ENCODE measurements at regions of chr10 and their contacts with region 1.

Region 1: DNA sequence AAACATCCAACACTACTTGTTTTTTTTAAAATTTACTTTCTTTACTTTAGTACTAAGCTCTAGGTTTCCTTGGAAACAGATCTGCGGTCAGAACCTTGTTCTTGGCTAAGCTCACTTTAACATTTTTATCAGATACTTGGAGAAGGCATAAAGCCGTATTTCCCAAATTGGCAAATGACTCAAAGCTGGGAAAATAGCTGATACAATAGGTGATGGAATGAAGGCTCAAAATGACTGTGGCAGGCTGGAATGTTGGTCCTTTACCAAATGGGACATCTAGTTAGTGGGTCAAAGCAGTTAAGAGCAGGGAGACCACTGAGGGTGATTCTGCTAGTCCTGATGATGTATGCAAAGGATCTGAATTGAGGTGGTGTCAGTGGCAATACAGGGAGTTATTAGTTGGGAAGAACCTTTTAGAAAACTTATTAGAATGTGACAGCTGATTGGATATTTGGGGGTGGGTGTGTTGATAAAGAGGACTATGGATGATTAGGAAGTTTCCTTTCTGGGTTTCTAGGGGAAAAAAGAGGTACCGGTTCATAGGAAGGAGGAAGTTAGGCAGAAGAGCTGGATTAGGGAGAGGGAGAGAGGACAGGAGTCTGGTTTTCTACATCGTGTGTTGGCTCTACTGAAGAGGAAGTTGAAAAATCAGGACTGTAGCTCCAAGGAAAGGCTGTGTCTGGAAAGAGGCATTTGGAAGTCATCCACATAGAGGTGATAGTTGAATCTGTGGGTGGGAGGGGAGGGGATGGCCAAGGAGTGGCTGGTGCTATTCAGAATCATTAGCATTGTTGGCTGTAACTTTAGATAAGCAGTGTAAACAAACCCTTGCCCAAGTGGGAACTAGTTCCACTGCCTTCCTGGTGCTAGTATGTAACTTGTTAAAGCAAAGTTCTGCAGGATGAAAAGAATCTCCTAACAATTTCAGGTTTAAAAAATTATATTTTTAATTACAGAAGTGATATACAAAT is 13.1 kb downstream of the PLCE1 start:
- DNase-seq: peak; percentile 78 to 89
- H3K4me3 ChIP-seq: peak overlapping the region; percentile 10
- H3K4me3 Mint-ChIP-seq: peak overlapping the region; percentile 62
- H3K27ac Mint-ChIP-seq: peak overlapping the region; percentile 74
- H3K4me1 ChIP-seq: peaks cover 67% of the 10 kb centered on the region
- H3K4me1 Mint-ChIP-seq: peaks cover 33% of the 10 kb centered on the region
- H3K27me3 ChIP-seq: no peaks in the 10 kb centered on the region
- H3K27me3 Mint-ChIP-seq: no peaks in the 10 kb centered on the region
- CTCF ChIP-seq: no peak

Region 2: DNA sequence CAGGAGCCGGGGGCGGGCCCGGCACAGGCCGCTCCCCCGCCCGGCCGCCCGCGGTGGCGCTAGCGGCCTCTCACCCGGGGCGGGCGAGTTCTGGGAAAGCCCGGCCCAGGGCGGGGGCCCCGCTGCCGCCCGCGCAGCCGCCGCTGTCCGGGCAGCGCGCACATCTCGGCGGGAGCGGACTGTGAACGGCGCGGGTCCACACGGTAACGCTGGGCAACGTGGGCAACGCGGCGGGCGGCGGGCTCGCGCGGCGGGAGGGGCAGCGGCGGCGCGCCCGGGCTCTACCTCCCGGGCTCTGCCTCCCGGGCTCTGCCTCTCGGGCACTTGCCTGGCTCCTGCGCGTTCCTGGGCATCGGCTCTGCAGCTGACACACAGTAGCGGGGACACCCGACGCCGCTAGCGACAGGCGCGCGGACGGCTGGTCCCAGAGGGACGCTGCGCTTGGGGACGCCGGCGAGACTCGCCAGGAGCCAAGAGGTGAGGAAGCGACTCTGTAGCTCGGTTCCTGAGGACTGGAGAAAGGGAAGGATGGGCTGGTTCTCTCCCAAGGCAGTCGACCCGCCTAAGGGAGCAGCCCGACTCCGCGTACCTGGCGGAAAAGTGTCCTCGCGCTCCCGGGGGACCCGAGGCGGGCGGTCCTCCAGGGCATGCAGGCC is 13.0 kb before region 1 on chr10 and contains the start of gene PLCE1:
- CTCF ChIA-PET with region 1: interaction called, 11 read pairs
- POLR2A ChIA-PET with region 1: interaction called, 8 read pairs
- intact Hi-C with region 1: loop called (anchors 1 kb)
- DNase-seq: peak; percentile 65 to 83
- H3K4me3 ChIP-seq: peak within 1 kb of the TSS; percentile 72
- H3K4me3 Mint-ChIP-seq: peak within 1 kb of the TSS; percentile 70
- H3K27ac Mint-ChIP-seq: peak within 1 kb of the TSS; percentile 6
- H3K4me1 ChIP-seq: peaks cover 49% of the 10 kb centered on the region
- H3K4me1 Mint-ChIP-seq: peaks cover 54% of the 10 kb centered on the region
- H3K27me3 ChIP-seq: no peaks in the 10 kb centered on the region
- H3K27me3 Mint-ChIP-seq: no peaks in the 10 kb centered on the region
- CTCF ChIP-seq: no peak
- total RNA-seq, gene PLCE1: 10.7 and 12.8 TPM in 2 replicates

Region 3: DNA sequence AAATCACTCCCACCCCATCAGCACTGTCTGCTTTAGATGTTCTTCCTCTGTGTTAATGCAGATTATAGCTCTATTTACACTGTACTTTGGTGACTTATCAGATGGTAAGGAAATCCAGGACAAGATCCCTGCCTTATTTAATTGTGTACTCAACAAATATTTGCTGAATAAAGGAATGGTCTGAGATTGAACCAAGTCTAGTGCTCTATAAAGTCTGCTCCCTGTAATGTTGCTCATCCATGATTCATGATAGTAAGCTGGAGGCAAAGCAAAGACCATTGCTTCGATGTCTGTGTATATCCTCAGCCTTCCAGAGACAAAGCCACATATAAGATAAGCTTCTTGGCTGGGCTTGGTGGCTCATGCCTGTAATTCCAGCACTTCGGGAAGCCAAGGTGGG is 20.3 kb after region 1 on chr10:
- CTCF ChIA-PET with region 1: no interaction called
- POLR2A ChIA-PET with region 1: no interaction called
- intact Hi-C with region 1: loop called (anchors 1 kb)
- DNase-seq: peak; percentile 30 to 45
- H3K4me3 ChIP-seq: no peak overlapping the region
- H3K4me3 Mint-ChIP-seq: no peak overlapping the region
- H3K27ac Mint-ChIP-seq: no peak overlapping the region
- H3K4me1 ChIP-seq: peaks cover 6% of the 10 kb centered on the region
- H3K4me1 Mint-ChIP-seq: peaks cover 12% of the 10 kb centered on the region
- H3K27me3 ChIP-seq: no peaks in the 10 kb centered on the region
- H3K27me3 Mint-ChIP-seq: no peaks in the 10 kb centered on the region
- CTCF ChIP-seq: no peak

Region 4: DNA sequence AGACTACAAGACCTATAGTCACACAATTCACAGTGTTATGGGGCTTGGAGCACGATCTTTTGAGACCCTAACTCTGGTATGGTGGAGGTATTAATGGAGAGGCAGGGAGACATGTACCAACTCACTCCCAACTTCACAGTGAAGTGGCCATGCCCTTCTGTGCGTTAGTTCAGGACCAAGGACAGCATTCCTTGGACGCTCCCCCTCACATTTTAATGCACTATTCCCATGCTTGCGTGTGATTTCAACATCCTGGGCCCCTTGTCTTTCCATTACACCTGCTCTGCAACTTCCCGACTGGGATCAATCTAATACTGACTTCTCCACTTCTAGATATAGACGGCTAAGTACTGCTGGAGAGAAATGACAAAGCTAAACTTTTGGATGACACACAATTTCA is 59.5 kb after region 1 on chr10:
- CTCF ChIA-PET with region 1: no interaction called
- POLR2A ChIA-PET with region 1: no interaction called
- intact Hi-C with region 1: loop called (anchors 2 kb)
- DNase-seq: peak; percentile 64 to 73
- H3K4me3 ChIP-seq: no peak overlapping the region
- H3K4me3 Mint-ChIP-seq: no peak overlapping the region
- H3K27ac Mint-ChIP-seq: no peak overlapping the region
- H3K4me1 ChIP-seq: peaks cover 17% of the 10 kb centered on the region
- H3K4me1 Mint-ChIP-seq: peaks cover 19% of the 10 kb centered on the region
- H3K27me3 ChIP-seq: no peaks in the 10 kb centered on the region
- H3K27me3 Mint-ChIP-seq: no peaks in the 10 kb centered on the region
- CTCF ChIP-seq: no peak

Region 5: DNA sequence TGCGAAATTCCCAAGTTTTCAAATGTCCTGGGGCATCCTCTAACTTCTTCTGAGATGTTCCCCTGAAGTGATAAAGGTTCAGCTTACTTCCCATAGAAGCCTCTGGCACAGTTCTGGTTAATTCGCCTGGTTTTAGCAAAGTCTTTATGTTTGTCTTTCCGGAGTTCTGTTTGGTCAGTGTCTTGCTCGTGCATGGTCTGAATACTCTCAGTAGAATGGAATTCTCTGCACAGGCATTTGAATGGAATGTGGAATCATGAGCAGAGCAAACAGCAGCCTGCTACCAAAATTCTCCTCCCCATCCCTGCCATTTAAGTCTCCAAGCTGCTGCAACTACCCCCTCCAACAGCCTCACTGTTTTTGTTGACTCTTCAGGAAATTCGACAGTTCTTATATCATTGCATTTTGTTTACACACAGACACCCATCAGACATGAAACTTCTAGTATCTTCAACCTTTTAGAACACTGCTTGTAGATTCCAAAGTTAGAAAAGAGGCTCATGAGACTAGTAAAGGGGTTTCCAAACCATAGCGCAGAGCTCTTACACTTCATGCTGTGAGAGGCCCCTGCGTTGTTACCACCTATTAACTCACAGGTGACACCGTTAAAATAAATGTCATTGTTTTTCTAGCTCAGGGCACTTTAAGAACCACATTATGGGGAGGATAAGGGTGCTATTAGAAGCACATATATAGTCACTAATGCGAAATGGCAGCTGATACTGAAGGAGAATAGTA is 116.6 kb after region 1 on chr10:
- CTCF ChIA-PET with region 1: no interaction called
- POLR2A ChIA-PET with region 1: no interaction called
- intact Hi-C with region 1: loop called (anchors 1 kb)
- DNase-seq: peak; percentile 79 to 84
- H3K4me3 ChIP-seq: no peak overlapping the region
- H3K4me3 Mint-ChIP-seq: peak overlapping the region; percentile 47
- H3K27ac Mint-ChIP-seq: no peak overlapping the region
- H3K4me1 ChIP-seq: peaks cover 45% of the 10 kb centered on the region
- H3K4me1 Mint-ChIP-seq: peaks cover 22% of the 10 kb centered on the region
- H3K27me3 ChIP-seq: no peaks in the 10 kb centered on the region
- H3K27me3 Mint-ChIP-seq: no peaks in the 10 kb centered on the region
- CTCF ChIP-seq: no peak

Region 6: GRCh38 chr10:94315024-94315451 is 308.2 kb after region 1 on chr10:
- CTCF ChIA-PET with region 1: interaction called, 5 read pairs
- POLR2A ChIA-PET with region 1: no interaction called
- intact Hi-C with region 1: loop called (anchors 1 kb)
- DNase-seq: peak; percentile 49
- H3K4me3 ChIP-seq: no peak overlapping the region
- H3K4me3 Mint-ChIP-seq: no peak overlapping the region
- H3K27ac Mint-ChIP-seq: peak overlapping the region; percentile 55
- H3K4me1 ChIP-seq: peaks cover 38% of the 10 kb centered on the region
- H3K4me1 Mint-ChIP-seq: peaks cover 5% of the 10 kb centered on the region
- H3K27me3 ChIP-seq: no peaks in the 10 kb centered on the region
- H3K27me3 Mint-ChIP-seq: no peaks in the 10 kb centered on the region
- CTCF ChIP-seq: peak in 1 of 2 experiments; percentile 0